ENCODE measurements at regions of chr1 and their contacts with region 1.

Region 1: GRCh38 chr1:31422505-31423319 is 9.7 kb downstream of the SERINC2 start:
- DNase-seq: peak; percentile 52 to 73
- H3K4me3 ChIP-seq: no peak overlapping the region
- H3K27ac ChIP-seq: no peak overlapping the region
- H3K4me1 ChIP-seq: no peaks in the 10 kb centered on the region
- H3K27me3 ChIP-seq: no peaks in the 10 kb centered on the region
- CTCF ChIP-seq: peak; percentile 92 to 94

Region 2: DNA sequence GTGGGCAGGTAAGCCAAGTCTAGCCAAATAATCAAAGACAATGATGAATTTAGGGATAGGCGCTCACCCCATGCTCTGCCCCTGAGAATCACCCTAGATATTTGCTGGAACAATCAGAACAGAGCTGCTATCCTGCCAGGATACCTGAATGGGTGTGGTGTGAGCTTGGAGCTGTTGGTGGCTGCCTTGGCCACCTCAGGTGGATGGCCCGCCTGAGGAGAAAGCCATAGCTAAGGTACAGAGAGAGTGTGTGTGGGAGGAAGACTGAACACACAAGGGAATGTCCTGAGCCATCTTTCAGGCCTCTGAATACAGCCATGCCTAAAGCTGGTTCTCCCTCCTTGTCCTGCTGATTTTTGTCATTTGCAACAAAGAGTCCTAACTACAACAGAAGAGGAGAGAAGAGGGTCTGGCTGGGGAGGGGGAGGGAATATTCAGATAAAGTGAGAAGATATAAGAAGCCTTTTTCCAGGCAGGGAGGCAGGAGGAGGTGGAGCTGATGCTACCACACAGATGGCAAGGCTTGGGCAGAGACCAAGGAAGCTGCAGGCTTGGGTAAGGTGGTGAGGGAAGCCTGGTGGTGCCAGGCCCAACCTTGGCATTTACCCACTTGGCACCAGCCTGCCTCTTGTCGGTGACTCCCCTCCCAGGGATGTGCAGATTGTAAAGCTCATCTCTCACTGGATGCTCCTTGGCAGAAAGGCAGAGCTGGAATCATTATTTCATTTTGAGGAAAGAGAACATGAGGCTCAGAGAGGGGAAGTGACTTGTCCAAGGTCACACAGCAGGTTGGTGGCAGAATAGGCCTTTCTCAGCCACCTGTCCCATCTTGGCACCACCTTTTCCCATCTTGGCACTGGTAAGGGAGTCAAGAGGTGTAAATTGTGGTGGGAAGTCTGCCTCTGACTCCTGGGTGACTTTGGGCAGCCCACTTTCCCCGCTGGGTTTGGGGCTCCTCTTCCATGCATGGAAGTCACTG is 232.7 kb before region 1 on chr1:
- intact Hi-C with region 1: loop called (anchors 5 kb)
- DNase-seq: no peak
- H3K4me3 ChIP-seq: no peak overlapping the region
- H3K27ac ChIP-seq: no peak overlapping the region
- H3K4me1 ChIP-seq: no peaks in the 10 kb centered on the region
- H3K27me3 ChIP-seq: peaks cover 0 to 26% of the 10 kb centered on the region in 2 donors
- CTCF ChIP-seq: no peak

Region 3: DNA sequence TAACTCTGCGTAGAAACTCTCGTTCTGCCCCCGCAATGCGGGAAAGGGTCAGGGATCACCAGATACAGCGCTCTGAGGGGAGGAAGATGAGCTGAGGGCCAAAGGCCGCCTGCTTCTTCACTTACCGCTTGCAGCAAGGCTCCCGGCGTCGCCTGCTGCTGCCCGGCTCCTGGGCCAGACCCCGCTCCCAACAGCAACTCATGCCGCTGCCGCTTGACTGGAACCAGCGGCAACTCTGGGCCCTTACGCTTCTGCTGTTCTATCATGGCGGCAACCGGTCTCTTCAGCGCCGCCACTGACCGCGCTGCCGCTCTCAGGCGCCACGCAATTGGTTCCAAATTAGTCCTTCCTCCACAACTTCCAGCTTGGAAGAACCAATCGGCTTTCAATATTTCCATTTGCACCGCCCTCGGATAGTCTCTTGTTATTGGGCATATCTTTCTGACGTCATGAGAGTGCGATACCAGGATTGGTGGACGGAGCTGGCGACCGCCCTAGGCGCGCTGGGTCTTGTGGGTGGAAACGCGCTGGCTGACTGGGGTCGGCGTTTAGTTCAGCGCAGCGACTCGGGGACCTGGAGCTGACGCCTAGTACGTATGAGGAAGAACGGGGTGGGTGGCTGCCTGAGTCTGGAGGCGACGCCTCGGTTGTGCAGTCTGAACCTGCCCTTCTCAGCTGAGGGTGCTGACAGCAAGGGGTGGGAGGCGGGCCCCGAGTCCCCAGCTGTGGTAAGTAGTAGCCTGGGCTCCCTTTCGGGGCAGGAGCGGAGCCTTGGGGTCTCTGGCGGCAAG is 126.0 kb before region 1 on chr1 and contains the starts of genes SNRNP40 and ZCCHC17:
- intact Hi-C with region 1: loop called (anchors 10 kb)
- DNase-seq: peak; percentile 96 to 97
- H3K4me3 ChIP-seq: peak within 1 kb of the TSS; percentile 98 to 99
- H3K27ac ChIP-seq: peak within 1 kb of the TSS; percentile 79 to 96
- H3K4me1 ChIP-seq: peaks cover 0 to 38% (median 23%) of the 10 kb centered on the region in 4 donors
- H3K27me3 ChIP-seq: no peaks in the 10 kb centered on the region
- CTCF ChIP-seq: no peak

Region 4: GRCh38 chr1:31394628-31395193 is 28.0 kb before region 1 on chr1:
- intact Hi-C with region 1: loop called (anchors 2 kb)
- DNase-seq: peak; percentile 77 to 87
- H3K4me3 ChIP-seq: peak overlapping the region; percentile 4 to 40
- H3K27ac ChIP-seq: no peak overlapping the region
- H3K4me1 ChIP-seq: peaks cover 0 to 10% (median 4%) of the 10 kb centered on the region in 4 donors
- H3K27me3 ChIP-seq: no peaks in the 10 kb centered on the region
- CTCF ChIP-seq: peak; percentile 85 to 86

Measured in tibial artery (tissue), 4 donors.